Activated CD8-positive, alpha-beta T cell treated with anti-CD3 and anti-CD28 coated beads for 36 hours (primary cell): ENCODE measurements at regions of chr3 and their contacts with region 1.

Region 1: GRCh38 chr3:132343018-132343612 is 25.9 kb downstream of the ACP3 start:
- DNase-seq: peak; percentile 43
- ATAC-seq: peak; percentile 65
- H3K4me3 Mint-ChIP-seq: no peak overlapping the region
- H3K27ac Mint-ChIP-seq: no peak overlapping the region
- H3K4me1 Mint-ChIP-seq: peaks cover 4% of the 10 kb centered on the region
- H3K27me3 Mint-ChIP-seq: peaks cover 1% of the 10 kb centered on the region
- CTCF ChIP-seq: peak; percentile 72

Region 2: DNA sequence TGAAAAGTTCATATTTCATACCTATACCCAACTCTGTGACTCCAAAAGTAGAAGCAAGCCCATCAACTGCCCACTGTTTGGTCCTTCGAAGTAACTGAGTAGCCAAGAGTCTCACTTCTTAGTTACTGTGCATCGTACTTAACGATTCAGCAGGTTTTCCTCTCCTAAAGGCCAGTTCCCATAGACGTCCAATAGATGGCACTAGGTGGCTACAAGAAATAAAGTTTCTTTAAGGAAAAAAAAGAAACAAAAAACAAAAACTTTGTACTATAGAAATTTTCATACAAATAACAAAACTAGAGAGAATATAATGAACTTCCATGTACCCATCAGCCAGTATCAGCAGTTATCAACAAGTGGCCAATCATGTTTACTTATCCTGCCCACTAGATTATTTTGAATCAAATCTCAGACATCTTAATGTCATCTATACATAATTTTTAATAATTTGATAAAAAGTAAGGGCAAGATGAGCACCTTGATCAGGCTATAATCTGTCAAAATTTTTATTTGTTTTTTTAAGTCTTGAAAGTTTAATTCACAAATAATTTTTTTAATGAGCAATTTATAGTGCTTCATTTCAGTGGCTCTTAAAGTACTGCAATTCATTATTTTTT is 89.7 kb before region 1 on chr3:
- CTCF ChIA-PET with region 1: interaction called, 50 read pairs
- POLR2A ChIA-PET with region 1: no interaction called
- intact Hi-C with region 1: loop called (anchors 2 kb)
- DNase-seq: peak; percentile 26
- ATAC-seq: peak; percentile 60
- H3K4me3 Mint-ChIP-seq: no peak overlapping the region
- H3K27ac Mint-ChIP-seq: no peak overlapping the region
- H3K4me1 Mint-ChIP-seq: no peaks in the 10 kb centered on the region
- H3K27me3 Mint-ChIP-seq: peaks cover 11% of the 10 kb centered on the region
- CTCF ChIP-seq: peak; percentile 72

Region 3: GRCh38 chr3:132311841-132312240 is 31.3 kb before region 1 on chr3:
- CTCF ChIA-PET with region 1: no interaction called
- POLR2A ChIA-PET with region 1: no interaction called
- intact Hi-C with region 1: no loop called
- DNase-seq: no peak
- ATAC-seq: no peak
- H3K4me3 Mint-ChIP-seq: no peak overlapping the region
- H3K27ac Mint-ChIP-seq: no peak overlapping the region
- H3K4me1 Mint-ChIP-seq: no peaks in the 10 kb centered on the region
- H3K27me3 Mint-ChIP-seq: no peaks in the 10 kb centered on the region
- CTCF ChIP-seq: no peak

Region 4: DNA sequence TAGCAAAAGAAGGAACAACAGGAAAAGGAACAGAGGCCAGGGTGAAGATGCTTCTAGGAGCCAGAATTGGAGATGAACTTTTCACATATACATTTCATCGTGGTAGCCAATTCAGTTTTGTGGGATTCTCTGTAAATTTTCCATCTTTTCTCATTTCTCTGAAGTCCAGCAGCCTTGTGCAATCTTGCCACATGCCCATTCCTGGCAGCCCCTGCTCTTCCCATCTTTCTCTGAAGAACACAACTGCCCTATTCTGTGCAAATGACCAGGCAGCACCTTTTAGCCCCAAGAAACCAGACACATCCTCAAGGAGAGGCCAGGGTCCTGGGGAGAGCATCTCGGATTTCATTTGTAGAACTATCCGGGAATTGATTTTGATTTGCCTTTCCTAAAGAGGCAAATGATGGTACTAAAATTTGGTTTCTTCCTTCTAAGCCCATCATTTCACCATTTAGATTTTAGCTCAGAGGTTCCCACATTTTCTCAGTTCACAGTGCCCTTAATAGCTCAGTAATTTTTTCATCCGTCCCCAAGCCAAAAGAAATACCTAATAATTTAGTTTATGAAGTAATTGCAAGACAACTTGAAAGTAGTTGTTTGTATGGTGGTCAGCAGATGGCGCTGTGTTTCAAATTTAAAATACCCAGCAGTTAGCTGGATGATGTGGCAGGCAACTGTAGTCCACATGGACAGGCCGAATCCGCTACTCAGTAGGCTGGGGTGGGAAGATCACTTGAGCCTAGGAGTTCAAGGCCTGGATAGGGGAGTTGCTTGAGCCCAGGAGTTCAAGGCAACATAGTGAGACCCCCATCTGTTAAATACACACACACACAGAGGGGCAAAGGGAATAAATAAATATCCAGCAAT is 192.7 kb after region 1 on chr3:
- CTCF ChIA-PET with region 1: no interaction called
- POLR2A ChIA-PET with region 1: no interaction called
- intact Hi-C with region 1: no loop called
- DNase-seq: peak; percentile 80
- ATAC-seq: peak; percentile 64
- H3K4me3 Mint-ChIP-seq: no peak overlapping the region
- H3K27ac Mint-ChIP-seq: peak overlapping the region; percentile 81
- H3K4me1 Mint-ChIP-seq: peaks cover 13% of the 10 kb centered on the region
- H3K27me3 Mint-ChIP-seq: no peaks in the 10 kb centered on the region
- CTCF ChIP-seq: peak; percentile 71